Activated CD4-positive, alpha-beta T cell treated with anti-CD3 and anti-CD28 coated beads for 36 hours (primary cell): ENCODE measurements at regions of chr20 and their contacts with region 1.

Region 1: DNA sequence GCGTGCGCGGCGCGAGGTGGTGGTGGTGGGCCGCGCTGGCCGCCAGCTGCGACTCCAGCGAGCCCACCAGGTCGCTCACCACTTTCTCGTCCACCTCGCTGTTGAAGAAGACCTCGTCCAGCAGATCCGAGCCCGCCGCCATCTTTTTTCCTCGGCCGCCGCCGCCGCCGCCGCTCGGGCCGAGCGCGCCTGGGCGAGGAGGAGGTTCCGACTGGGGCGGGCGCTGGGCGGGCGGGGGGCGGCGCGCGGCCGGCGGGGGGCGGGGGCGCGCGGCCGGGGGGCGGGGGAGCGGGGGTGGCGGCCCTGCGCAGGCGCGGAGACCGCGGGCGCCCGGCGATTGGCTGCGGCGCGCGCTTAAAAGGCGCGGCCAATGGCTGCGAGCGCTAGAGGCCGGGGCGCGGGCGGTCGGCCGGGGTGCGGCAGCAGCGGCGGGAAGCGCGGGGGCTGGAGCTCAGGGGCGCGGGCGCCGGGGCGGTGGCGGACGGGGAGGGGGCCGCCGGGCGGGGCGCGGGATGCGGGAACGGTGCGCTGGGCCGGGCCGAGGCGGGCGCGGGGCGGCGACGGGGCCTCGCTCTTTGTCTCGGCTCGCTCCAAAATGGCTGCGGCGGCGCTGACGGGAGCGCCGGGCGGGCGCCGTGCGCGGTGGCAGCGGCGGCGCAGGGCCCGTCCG is at the start of gene TAF4:
- DNase-seq: peak; percentile 87
- ATAC-seq: peak; percentile 79
- H3K4me3 Mint-ChIP-seq: peak within 1 kb of the TSS; percentile 75
- H3K27ac Mint-ChIP-seq: peak within 1 kb of the TSS; percentile 78
- H3K4me1 Mint-ChIP-seq: peaks cover 53% of the 10 kb centered on the region
- H3K27me3 Mint-ChIP-seq: no peaks in the 10 kb centered on the region
- total RNA-seq, gene TAF4: 15.4 to 27.1 TPM

Region 2: GRCh38 chr20:62010551-62011402 is 55.0 kb before region 1 on chr20:
- CTCF ChIA-PET with region 1: interaction called, 3 read pairs
- POLR2A ChIA-PET with region 1: no interaction called
- intact Hi-C with region 1: loop called in 1 of 2 experiments (anchors 2 kb)
- DNase-seq: peak; percentile 75
- ATAC-seq: peak; percentile 81
- H3K4me3 Mint-ChIP-seq: no peak overlapping the region
- H3K27ac Mint-ChIP-seq: peak overlapping the region; percentile 29
- H3K4me1 Mint-ChIP-seq: peaks cover 3% of the 10 kb centered on the region
- H3K27me3 Mint-ChIP-seq: no peaks in the 10 kb centered on the region

Region 3: GRCh38 chr20:62121776-62122631 is 56.2 kb after region 1 on chr20 and contains the start of gene LSM14B:
- CTCF ChIA-PET with region 1: interaction called, 3 read pairs
- POLR2A ChIA-PET with region 1: interaction called, 14 read pairs
- intact Hi-C with region 1: loop called (anchors 1 kb)
- DNase-seq: peak; percentile 99
- ATAC-seq: peak; percentile 84
- H3K4me3 Mint-ChIP-seq: peak within 1 kb of the TSS; percentile 80
- H3K27ac Mint-ChIP-seq: peak within 1 kb of the TSS; percentile 91
- H3K4me1 Mint-ChIP-seq: peaks cover 54% of the 10 kb centered on the region
- H3K27me3 Mint-ChIP-seq: no peaks in the 10 kb centered on the region
- total RNA-seq, gene LSM14B: 38.7 TPM

Region 4: DNA sequence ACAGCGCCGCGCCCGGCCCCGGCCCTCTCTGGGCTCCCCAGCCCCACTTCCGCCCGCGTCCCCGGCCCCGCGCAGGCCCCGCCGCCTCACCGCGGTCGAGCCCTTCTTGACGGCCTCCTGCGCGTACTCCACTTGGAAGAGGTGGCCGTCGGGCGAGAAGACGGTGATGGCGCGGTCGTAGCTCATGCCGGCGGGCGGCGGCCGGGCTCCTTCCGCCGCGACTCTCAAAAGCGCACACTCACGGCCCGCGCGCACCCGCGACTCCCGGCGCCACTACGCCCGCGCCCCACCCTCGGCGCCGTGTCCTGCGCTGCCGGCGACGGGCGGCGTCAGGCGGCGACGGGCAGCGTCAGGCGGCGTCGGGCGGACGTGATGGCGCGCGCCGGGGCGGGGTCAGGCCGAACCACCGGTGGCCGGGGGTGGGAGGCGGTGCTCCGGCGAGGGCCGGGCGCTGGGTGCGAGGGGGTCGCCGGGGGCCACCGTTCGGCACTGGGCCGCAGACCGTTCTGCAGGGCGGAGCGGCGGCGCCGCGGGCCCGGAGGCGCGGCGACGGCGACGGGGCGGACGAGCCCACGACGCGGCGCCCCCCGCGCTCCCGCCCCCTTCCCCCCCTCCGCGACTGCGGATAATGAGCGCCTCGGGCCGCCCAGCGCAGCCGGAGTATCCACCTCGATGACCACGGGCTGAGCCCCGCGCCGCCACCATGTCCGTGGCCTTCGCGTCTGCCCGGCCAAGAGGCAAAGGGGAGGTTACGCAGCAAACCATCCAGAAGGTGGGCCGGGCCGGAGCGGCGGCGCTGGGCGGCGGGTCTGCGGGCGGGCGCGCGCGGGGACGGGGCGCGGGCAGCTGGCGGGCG is 77.5 kb after region 1 on chr20 and contains the starts of genes PSMA7 and SS18L1:
- CTCF ChIA-PET with region 1: interaction called, 3 read pairs
- POLR2A ChIA-PET with region 1: interaction called, 9 read pairs
- intact Hi-C with region 1: loop called in 1 of 2 experiments (anchors 1 kb)
- DNase-seq: peak; percentile 92
- ATAC-seq: peak; percentile 87
- H3K4me3 Mint-ChIP-seq: peak within 1 kb of the TSS; percentile 89
- H3K27ac Mint-ChIP-seq: peak within 1 kb of the TSS; percentile 91
- H3K4me1 Mint-ChIP-seq: peaks cover 61% of the 10 kb centered on the region
- H3K27me3 Mint-ChIP-seq: no peaks in the 10 kb centered on the region
- total RNA-seq, gene PSMA7: 208 to 296 TPM
- total RNA-seq, gene SS18L1: 14.3 to 16.6 TPM

Region 5: DNA sequence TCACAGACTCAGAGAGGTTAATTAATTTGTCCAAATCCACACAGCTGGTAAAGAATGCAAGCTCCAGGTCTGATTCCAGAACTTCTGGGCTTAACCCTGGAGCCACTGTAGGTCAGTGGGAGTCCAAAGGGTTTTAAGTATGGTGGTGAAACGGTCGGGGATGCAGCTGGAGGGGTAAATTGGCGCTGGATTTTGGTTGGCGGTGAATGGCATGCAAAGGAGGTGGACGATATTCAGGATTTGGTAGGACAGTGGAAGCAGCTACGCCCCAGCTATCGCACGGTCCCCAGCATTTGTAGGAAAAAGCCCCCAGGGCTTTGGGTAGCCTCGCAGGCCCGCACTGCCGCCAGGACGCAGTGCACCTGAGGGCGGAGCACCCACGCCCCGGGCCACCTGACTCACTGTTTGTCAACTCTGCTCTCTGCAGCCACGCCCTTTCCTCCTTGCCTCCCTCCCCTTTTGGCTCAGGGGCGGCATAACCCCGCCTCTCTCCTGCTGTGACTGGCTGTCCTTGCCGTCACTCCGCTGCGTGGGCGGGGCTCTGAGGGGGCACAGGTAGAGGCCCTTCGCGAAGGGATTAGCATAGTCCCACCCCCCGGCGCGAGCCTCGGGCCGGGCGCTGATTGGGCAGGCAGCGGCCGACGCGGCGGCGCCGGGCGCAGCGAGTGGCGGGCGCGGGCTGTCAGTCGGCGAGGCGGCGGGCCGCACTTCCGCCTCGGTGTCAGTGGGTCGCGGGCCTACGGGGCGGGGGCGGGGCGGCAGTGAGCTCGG is 172.2 kb after region 1 on chr20 and contains the start of gene OSBPL2:
- CTCF ChIA-PET with region 1: no interaction called
- POLR2A ChIA-PET with region 1: no interaction called
- intact Hi-C with region 1: loop called in 1 of 2 experiments (anchors 1 kb)
- DNase-seq: peak; percentile 100
- ATAC-seq: peak; percentile 99
- H3K4me3 Mint-ChIP-seq: peak within 1 kb of the TSS; percentile 77
- H3K27ac Mint-ChIP-seq: peak within 1 kb of the TSS; percentile 74
- H3K4me1 Mint-ChIP-seq: peaks cover 34% of the 10 kb centered on the region
- H3K27me3 Mint-ChIP-seq: no peaks in the 10 kb centered on the region
- total RNA-seq, gene OSBPL2: 19.2 to 23.0 TPM

Region 6: DNA sequence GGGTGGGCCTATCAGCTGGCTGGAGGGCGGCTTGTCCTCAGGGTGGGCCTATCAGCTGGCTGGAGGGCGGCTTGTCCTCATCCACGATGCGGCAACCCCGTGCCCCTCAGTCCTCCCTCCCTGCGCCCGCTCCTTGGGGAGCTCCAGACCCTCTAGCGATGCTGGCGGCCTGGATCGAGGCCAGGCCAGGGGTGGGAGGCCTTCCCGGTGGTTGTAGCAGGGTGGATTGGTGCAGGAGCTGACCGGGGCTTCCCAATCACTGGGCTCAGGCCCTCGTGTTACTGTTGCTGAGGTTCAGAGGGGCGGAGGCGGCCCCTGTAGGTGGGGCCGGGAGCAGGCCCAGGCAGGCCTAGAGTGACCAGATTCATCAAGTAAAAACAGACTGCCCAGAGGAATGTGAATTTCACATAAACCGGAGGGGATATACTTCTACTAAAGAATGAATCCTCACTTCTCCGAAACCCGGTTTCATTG is 895.5 kb after region 1 on chr20:
- CTCF ChIA-PET with region 1: no interaction called
- POLR2A ChIA-PET with region 1: no interaction called
- intact Hi-C with region 1: no loop called
- DNase-seq: no peak
- ATAC-seq: no peak
- H3K4me3 Mint-ChIP-seq: no peak overlapping the region
- H3K27ac Mint-ChIP-seq: no peak overlapping the region
- H3K4me1 Mint-ChIP-seq: no peaks in the 10 kb centered on the region
- H3K27me3 Mint-ChIP-seq: no peaks in the 10 kb centered on the region